ENCODE measurements at regions of chr1 and their contacts with region 1.

Region 1: DNA sequence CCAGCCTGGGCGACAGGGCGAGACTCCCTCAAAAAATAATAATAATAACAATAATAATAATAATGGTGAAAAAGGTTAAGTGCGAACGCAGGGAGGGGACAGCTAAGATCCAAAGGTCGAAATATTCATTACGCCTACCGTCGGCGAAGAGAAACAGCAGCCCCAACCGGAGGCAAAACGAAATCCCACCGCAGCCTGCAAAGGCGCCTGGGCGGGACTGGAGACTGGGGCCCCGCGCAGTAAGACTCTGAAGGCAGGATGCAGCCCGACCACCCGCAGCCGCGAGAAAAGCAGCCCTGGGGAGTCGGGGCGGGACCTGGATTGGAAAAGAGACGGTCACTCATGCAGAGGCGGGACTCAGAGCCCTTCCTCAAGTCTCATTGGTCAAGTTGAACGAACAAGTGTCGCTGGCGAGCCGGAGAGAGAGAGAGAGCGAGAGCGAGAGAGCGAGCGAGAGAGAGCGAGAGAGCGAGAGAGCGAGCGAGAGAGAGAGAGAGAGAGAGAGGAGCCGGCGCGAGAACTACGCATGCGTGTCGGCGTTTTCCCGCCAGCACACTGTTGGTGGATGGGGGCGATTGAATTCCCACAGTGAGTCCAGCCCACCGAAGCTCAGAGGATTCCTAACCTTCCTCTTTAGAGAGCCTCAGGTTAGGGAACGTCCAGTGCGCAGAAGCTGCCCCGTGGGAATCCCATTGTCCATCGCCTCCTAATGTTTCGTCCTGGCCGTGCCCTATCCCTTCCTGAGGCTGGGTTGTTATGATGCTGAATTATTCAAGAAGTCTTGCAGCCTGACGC is 10.7 kb downstream of the ENTREP3 start:
- DNase-seq: peak; percentile 97 to 99
- ATAC-seq: peak; percentile 95
- H3K4me3 ChIP-seq: peak overlapping the region; percentile 12 to 35
- H3K27ac ChIP-seq: peak overlapping the region; percentile 24 to 93
- H3K4me1 ChIP-seq: no peaks in the 10 kb centered on the region
- H3K27me3 ChIP-seq: no peaks in the 10 kb centered on the region

Region 2: GRCh38 chr1:155172732-155173477 is 71.7 kb before region 1 on chr1 and contains the start of gene KRTCAP2:
- intact Hi-C with region 1: no loop called
- DNase-seq: peak; percentile 97 to 98
- ATAC-seq: peak; percentile 92
- H3K4me3 ChIP-seq: peak within 1 kb of the TSS; percentile 68 to 86
- H3K27ac ChIP-seq: peak within 1 kb of the TSS in 1 of 2 donors; percentile 71
- H3K4me1 ChIP-seq: no peaks in the 10 kb centered on the region
- H3K27me3 ChIP-seq: no peaks in the 10 kb centered on the region
- total RNA-seq, gene KRTCAP2: 136 to 143 TPM

Region 3: DNA sequence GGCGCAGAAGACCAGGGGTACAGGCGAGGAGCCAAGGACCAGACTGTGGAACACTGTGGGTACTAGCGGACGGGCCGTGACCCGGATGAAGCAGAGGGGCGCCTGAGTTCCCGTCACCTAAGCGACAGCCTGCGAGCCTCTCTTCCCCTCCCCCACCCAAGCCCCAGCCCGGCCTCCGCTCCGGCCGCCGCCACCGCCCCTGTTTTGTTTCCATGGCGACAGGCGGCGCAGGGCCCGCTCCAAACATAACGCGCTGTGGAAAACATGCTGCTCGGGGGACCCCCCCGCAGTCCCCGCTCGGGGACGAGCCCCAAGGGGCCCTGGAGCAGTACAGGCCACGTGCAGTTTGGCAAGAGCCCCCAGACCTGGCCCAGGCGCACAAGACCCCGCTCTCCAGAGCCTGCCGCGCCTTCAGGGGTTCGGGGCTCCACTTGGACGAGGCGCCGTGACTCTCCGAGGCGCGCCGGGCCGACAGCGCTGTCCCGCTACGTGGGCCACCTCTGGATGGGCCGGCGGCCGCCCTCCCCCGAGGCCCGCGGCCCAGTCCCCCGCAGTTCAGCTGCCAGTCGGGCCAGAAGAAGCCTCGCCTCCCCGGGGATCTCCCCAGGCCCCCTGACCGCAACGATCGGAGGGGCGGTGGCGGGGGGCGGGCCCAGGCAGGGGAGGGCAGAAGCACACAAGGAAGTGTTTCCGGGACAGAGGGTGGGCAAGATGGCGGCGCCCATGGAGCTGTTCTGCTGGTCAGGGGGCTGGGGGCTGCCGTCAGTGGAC is 35.8 kb before region 1 on chr1 and contains the start of gene MTX1:
- intact Hi-C with region 1: loop called (anchors 5 kb)
- DNase-seq: peak; percentile 96 to 98
- ATAC-seq: peak; percentile 93
- H3K4me3 ChIP-seq: peak within 1 kb of the TSS; percentile 34 to 60
- H3K27ac ChIP-seq: peak within 1 kb of the TSS; percentile 98 to 99
- H3K4me1 ChIP-seq: no peaks in the 10 kb centered on the region
- H3K27me3 ChIP-seq: no peaks in the 10 kb centered on the region
- total RNA-seq, gene MTX1: 20.3 to 21.3 TPM

Measured in aorta (tissue), 5 donors.